AG04450 (cell line): ENCODE measurements at regions of chr10 and their contacts with region 1.

Region 1: DNA sequence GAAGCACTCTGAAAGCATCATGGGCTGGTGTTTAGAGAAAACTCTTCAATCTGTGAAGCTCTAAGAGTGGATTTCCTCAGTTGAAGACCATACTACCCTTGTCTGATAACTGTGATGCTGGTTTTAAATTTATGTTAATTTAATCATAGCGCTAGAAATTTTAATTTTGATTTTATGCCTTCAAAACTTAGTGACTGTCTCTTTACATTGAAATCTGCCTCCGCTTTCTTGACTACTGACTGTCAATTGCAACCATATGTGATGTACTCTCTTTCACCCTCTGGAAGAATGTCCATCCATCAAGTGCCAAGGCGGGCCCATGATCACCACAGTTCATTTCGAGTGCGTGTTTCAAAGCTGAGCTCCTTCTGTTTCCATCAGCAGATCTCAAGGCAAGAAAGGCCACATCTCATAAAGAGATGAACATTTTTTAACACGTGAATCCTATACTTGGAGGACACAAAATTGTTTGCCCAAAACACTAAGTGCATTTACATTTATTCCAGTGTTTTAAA is 147.1 kb downstream of the ITGA8 start:
- DNase-seq: no peak
- H3K4me3 ChIP-seq: no peak overlapping the region
- H3K27ac ChIP-seq: no peak overlapping the region
- H3K27me3 ChIP-seq: no peaks in the 10 kb centered on the region
- CTCF ChIP-seq: no peak

Region 2: DNA sequence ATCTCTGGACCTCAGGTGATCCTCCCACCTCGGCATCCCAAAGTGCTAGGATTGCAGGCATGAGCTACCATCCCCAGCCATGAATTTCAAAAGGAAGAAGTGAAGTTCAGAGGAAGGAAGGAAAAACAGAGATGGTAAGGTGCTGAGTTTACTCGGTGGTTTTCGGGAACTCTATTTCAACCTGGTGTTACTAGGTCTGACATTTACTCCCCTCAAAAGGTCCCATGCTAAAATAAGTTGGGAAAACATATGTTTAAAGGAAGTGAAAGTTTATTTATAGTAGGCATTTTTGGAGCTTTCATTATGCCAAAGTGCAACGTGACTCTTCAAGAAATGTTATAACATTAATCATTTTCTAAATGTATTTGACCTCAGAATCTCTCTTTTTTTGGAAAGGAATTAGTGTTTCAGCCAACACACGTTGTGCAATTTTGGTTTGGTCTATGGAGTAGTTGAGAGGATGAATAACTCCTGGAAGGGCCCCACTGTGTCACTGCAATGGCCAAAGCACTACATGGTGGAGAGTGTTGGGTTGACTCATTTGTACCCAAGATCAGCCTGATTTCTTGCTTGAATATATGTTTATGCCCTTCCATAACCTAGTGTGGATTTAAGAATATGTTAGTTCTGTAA is 86.8 kb before region 1 on chr10:
- CTCF ChIA-PET with region 1: no interaction called
- POLR2A ChIA-PET with region 1: no interaction called
- DNase-seq: no peak
- H3K4me3 ChIP-seq: no peak overlapping the region
- H3K27ac ChIP-seq: no peak overlapping the region
- H3K27me3 ChIP-seq: no peaks in the 10 kb centered on the region
- CTCF ChIP-seq: no peak

Region 3: DNA sequence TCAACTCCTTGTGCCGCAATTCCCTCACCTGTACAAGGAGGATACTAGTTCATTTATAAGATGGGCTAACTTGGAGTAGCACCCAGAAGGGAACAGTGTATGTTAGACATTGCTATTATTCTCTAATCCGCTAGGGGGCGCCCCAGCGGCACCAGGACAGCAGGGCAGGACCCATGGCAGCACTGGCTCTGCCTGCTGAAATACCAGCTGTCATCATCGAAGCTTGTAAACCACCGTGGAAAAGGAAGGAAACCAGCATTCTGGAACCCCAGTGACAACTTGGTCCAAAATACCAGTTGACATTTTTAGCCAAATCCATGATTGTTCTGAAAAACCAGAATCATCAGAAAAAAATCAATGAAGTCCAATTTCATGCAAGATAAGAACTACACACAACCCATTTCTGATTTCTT is 12.7 kb after region 1 on chr10:
- CTCF ChIA-PET with region 1: interaction called, 18 read pairs
- POLR2A ChIA-PET with region 1: no interaction called
- DNase-seq: no peak
- H3K4me3 ChIP-seq: no peak overlapping the region
- H3K27ac ChIP-seq: no peak overlapping the region
- H3K27me3 ChIP-seq: no peaks in the 10 kb centered on the region
- CTCF ChIP-seq: peak; percentile 69